ENCODE measurements at regions of chr19 and their contacts with region 1.

Region 1: DNA sequence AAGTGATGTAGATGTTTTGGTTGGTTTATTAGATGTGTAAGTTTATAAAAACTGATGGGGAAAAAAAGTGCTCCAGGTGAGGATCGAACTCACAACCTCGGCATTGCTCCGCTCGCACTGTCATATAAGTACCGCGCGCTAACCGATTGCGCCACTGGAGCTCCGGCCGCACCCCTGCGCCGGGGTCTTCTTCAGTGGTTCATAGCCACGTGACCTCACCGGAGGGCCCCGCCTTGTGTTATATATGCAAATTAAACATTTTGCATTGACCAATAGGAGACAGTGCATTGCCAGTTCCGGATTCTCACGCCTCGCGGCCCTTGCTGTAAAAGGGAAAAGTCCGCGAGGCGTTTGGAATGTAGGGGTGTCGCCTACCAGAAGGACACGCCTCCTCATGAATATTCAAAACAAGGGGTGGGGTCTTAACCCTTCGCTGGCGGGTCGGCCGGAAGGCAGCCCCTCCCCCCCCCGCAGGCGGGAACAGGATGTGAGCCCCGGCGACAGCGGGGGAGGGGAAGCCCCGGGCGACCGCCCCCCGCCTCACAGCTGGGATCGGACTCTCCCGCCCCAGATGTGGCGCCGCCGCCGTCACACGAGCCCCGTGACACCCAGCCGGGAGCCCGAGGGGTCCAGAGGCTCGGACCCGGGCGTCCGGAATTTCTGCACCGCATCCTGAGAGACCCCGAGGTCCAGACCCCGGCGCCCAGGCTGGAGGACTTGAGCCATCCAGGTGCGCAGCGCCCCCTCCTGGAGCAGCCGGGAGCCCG is at the start of gene PLEKHG2:
- DNase-seq: peak; percentile 98
- H3K4me3 Mint-ChIP-seq: peak within 1 kb of the TSS; percentile 88
- H3K27ac Mint-ChIP-seq: peak within 1 kb of the TSS; percentile 94
- H3K4me1 Mint-ChIP-seq: peaks cover 38% of the 10 kb centered on the region
- H3K27me3 Mint-ChIP-seq: peaks cover 1% of the 10 kb centered on the region
- total RNA-seq, gene PLEKHG2: 74.4 to 77.9 TPM

Region 2: DNA sequence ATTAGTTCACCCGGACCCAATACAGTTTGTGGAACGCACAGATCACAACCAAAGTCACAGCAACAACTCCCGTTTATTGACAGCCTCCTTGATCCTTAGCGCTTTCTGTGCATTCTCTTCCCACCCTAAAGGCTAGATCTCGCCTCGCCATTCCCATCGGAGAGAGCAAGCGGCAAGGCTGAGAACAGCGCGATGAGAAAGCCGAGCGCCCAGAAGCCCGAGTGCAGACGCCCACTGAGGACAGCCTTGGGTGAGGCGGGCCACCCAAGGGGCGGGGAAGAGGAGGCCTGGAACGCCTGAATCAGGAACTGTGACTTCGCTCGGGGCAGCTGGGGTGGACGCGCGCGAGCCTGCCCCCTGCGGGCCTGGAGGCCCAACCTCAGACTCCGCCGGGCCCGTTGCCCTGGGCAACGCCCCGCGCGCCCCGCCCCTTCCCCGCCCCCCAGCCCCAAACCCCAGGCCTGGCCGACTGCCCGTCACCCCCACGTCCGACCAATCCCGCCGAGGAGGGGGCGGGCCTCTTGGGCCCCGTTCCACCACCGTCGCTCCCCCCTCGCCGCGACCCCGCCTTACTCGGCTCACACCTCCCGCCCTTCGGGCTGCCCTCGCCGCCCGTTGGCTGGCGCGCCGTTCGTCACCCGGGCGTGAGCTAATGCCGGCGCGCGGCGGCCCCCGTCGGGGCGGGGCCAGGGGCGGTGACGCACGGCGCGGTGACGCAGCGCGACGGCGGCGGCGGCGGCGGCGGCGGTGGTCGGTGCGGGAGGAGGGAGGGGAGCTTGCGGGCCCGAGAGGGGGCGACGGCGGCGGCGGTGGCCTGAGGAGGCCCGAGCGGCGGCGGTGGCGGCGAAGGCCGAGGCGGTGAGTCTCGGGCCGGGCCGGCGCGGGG is 70.3 kb before region 1 on chr19 and contains the start of gene SAMD4B:
- CTCF ChIA-PET with region 1: interaction called, 10 read pairs
- POLR2A ChIA-PET with region 1: no interaction called
- DNase-seq: peak; percentile 99
- H3K4me3 Mint-ChIP-seq: peak within 1 kb of the TSS; percentile 89
- H3K27ac Mint-ChIP-seq: peak within 1 kb of the TSS; percentile 94
- H3K4me1 Mint-ChIP-seq: peaks cover 70% of the 10 kb centered on the region
- H3K27me3 Mint-ChIP-seq: no peaks in the 10 kb centered on the region
- total RNA-seq, gene SAMD4B: 40.2 to 45.6 TPM

Region 3: GRCh38 chr19:39363901-39364457 is 48.3 kb before region 1 on chr19:
- CTCF ChIA-PET with region 1: no interaction called
- POLR2A ChIA-PET with region 1: no interaction called
- DNase-seq: no peak
- H3K4me3 Mint-ChIP-seq: no peak overlapping the region
- H3K27ac Mint-ChIP-seq: no peak overlapping the region
- H3K4me1 Mint-ChIP-seq: no peaks in the 10 kb centered on the region
- H3K27me3 Mint-ChIP-seq: no peaks in the 10 kb centered on the region

Region 4: GRCh38 chr19:39435499-39436349 is 23.4 kb after region 1 on chr19 and contains the start of gene RPS16:
- CTCF ChIA-PET with region 1: interaction called, 12 read pairs
- POLR2A ChIA-PET with region 1: interaction called, 4 read pairs
- DNase-seq: peak; percentile 99
- H3K4me3 Mint-ChIP-seq: peak within 1 kb of the TSS; percentile 98
- H3K27ac Mint-ChIP-seq: peak within 1 kb of the TSS; percentile 97
- H3K4me1 Mint-ChIP-seq: peaks cover 55% of the 10 kb centered on the region
- H3K27me3 Mint-ChIP-seq: peaks cover 3% of the 10 kb centered on the region
- total RNA-seq, gene RPS16: 2,465 to 3,009 TPM

Region 5: DNA sequence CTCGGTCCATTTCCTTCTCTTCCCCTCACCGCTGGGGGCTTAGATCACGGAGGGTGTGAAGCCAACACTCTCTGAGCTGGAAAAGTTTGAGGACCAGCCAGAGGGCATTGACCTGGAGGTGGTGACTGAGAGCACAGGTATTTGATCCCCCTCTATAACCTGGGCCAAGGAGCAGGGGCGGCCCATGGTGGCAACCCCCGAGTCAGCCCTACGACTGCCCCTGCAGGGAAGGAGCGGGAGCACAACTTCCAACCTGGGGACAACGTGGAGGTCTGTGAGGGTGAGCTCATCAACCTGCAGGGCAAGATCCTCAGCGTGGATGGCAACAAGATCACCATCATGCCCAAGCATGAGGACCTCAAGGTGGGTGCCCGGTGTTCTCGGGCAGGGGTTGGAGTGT is 56.8 kb after region 1 on chr19:
- CTCF ChIA-PET with region 1: no interaction called
- POLR2A ChIA-PET with region 1: no interaction called
- DNase-seq: no peak
- H3K4me3 Mint-ChIP-seq: no peak overlapping the region
- H3K27ac Mint-ChIP-seq: no peak overlapping the region
- H3K4me1 Mint-ChIP-seq: peaks cover 5% of the 10 kb centered on the region
- H3K27me3 Mint-ChIP-seq: no peaks in the 10 kb centered on the region